Activated naive CD4-positive, alpha-beta T cell treated with anti-CD3 and anti-CD28 coated beads for 36 hours (primary cell): ENCODE measurements at regions of chr13 and their contacts with region 1.

Region 1: DNA sequence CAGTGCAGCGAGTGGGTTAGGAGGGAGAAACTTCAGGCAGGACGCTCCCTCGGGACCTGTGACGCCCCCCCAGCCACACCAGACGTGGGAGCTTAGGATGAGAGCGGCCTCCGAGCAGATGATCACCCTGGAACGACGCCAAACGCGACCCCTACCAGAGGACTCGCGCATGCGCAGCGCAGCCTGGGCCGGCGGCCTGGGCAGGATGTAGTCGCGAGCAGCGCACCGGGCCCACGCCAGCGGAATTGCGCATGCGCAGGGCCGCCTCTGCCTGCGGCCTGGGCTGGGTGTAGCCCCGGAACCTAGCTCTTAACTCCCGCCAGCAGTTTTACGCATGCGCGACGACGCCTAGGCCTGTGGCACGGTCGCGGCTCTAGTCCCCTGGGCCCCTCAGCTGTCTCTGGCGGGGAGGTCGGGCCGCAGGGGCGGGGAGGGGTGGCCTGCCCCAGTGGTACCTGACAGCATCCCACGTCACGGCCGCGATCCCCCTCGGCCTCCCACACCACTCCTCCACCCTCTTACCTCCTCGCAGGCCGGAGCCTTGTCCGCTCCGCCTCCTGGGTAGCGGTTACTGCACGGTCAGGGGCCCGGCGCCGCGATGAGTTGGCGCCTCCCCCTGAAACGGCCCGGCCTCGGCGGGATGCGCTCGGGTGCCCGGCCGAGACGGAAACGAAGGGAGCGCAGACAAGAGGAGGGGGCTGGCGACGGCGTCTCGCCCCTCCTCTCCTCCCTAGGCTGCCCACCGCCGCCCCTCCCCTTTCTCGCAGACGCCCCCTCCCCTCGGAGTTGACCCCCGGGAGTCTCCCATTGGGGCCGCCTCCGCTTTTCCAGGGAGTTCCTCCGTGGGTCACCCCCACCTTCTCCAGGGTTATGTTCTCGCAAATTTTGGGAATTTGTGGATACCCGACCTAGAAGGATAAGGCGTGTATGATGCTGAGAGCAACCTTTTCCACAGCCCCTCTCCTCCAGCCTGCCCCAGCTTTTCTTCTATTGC is at the start of gene RCBTB2:
- DNase-seq: peak; percentile 98
- H3K4me3 Mint-ChIP-seq: peak within 1 kb of the TSS; percentile 93
- H3K27ac Mint-ChIP-seq: peak within 1 kb of the TSS; percentile 97
- H3K4me1 Mint-ChIP-seq: peaks cover 17% of the 10 kb centered on the region
- H3K27me3 Mint-ChIP-seq: no peaks in the 10 kb centered on the region
- total RNA-seq, gene RCBTB2: 1.2 to 1.4 TPM

Region 2: DNA sequence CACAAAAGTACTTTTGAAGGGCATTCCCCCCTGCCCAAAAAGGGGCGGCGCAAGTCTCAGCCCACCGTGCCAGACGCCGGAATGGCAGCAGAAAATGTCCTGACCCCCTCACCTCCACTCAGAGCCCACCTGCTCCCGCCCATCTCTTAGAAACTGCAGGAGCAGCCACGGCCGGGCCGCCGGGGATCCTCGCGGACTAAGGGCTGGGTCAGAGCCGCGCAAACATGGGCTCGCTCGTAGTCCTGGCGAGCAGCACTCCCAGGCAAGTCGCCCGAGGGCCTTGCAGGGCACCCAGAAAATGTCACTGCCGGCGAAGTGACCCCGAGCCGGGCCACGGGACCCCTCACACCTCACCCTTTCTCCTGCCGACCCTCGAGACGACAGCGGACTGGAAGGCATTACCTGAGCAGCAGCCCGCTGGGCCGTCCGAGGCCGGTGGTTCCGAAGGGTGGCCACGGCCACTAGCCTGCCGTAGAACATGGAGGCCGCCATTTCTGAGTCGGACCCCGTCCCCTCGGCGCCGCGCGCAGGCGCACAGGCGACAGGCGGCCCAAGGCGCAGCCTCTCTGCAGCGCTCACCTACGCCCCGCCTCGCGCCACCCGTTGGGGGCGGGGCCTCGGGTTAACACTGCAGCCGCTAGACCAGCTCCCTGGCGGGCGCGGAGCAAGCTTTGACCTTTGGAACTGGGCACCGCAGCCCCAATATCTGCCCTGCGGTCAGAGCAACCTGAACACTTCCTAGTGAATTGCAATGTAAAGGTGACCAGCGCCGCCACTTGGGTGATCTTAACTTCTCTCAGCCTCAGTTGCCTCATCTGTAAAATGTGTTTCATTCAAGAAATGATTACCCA is 531.8 kb before region 1 on chr13 and contains the start of gene SUCLA2:
- CTCF ChIA-PET with region 1: no interaction called
- intact Hi-C with region 1: loop called (anchors 1 kb)
- DNase-seq: peak; percentile 92
- H3K4me3 Mint-ChIP-seq: peak within 1 kb of the TSS; percentile 94
- H3K27ac Mint-ChIP-seq: peak within 1 kb of the TSS; percentile 81
- H3K4me1 Mint-ChIP-seq: peaks cover 31% of the 10 kb centered on the region
- H3K27me3 Mint-ChIP-seq: no peaks in the 10 kb centered on the region
- total RNA-seq, gene SUCLA2: 44.0 to 44.4 TPM

Region 3: DNA sequence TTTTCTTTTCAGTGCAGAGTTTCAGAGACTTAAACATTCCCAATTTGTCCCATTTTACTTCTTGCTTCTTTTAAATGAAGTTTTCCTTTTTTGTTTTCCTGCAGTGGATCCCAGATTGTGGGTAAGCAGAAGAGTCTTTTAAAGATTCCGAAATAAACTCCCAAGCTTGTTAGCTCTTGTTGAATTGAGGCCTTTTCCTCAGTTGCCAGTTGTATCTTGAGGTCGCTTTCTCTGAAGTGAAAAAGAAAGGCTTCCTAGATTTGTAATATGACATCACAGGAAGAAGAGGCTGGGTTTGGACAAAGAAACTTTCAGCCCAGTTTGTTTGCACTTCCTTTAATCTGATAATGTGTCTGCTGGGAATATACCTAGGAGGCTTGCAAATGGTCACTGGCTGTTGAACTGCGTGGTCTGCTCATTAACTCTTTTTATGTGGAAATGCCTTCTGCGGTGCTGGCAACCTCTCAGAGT is 119.9 kb before region 1 on chr13 and contains the start of gene LPAR6:
- CTCF ChIA-PET with region 1: no interaction called
- intact Hi-C with region 1: loop called (anchors 1 kb)
- DNase-seq: peak; percentile 20
- H3K4me3 Mint-ChIP-seq: peak within 1 kb of the TSS; percentile 84
- H3K27ac Mint-ChIP-seq: peak within 1 kb of the TSS; percentile 92
- H3K4me1 Mint-ChIP-seq: peaks cover 33% of the 10 kb centered on the region
- H3K27me3 Mint-ChIP-seq: no peaks in the 10 kb centered on the region
- total RNA-seq, gene LPAR6: 6.1 to 6.6 TPM

Region 4: GRCh38 chr13:48505597-48506091 is 27.2 kb before region 1 on chr13:
- CTCF ChIA-PET with region 1: no interaction called
- intact Hi-C with region 1: loop called (anchors 1 kb)
- DNase-seq: peak; percentile 70
- H3K4me3 Mint-ChIP-seq: peak overlapping the region; percentile 59
- H3K27ac Mint-ChIP-seq: peak overlapping the region; percentile 75
- H3K4me1 Mint-ChIP-seq: peaks cover 56% of the 10 kb centered on the region
- H3K27me3 Mint-ChIP-seq: no peaks in the 10 kb centered on the region

Region 5: GRCh38 chr13:48653472-48653939 is 120.7 kb after region 1 on chr13 and contains the start of gene CYSLTR2:
- CTCF ChIA-PET with region 1: no interaction called
- intact Hi-C with region 1: loop called (anchors 5 kb)
- DNase-seq: peak; percentile 27
- H3K4me3 Mint-ChIP-seq: peak within 1 kb of the TSS; percentile 75
- H3K27ac Mint-ChIP-seq: peak within 1 kb of the TSS; percentile 82
- H3K4me1 Mint-ChIP-seq: peaks cover 29% of the 10 kb centered on the region
- H3K27me3 Mint-ChIP-seq: no peaks in the 10 kb centered on the region
- total RNA-seq, gene CYSLTR2: 1.3 to 1.7 TPM